Posterior vena cava (tissue), 2 donors: ENCODE measurements at regions of chr13 and their contacts with region 1.

Region 1: GRCh38 chr13:73045031-73045430 is 13.8 kb upstream of the KLF5 start:
- DNase-seq: no peak

Region 2: DNA sequence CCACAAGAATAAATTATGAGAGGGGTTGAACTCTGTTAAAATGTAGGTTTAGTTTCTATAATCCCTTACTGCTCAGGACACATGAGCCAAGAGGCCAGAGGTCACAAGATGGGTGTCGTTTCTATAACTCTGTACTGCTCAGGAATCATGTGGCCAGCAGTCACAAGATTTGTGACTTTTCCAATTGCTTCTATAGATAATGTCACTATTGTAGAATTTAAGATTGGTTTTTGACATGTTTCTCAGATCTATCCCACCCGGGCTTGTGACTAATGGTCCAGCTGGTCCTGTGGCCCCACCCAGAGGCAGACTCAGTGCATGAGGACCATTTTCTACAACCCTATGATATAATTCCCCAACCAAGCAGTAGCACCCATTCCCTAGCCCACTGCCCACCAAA is 1751.1 kb after region 1 on chr13:
- intact Hi-C with region 1: loop called in 1 of 2 experiments (anchors 5 kb)
- DNase-seq: no peak